AG04449 (cell line): ENCODE measurements at regions of chr12 and their contacts with region 1.

Region 1: DNA sequence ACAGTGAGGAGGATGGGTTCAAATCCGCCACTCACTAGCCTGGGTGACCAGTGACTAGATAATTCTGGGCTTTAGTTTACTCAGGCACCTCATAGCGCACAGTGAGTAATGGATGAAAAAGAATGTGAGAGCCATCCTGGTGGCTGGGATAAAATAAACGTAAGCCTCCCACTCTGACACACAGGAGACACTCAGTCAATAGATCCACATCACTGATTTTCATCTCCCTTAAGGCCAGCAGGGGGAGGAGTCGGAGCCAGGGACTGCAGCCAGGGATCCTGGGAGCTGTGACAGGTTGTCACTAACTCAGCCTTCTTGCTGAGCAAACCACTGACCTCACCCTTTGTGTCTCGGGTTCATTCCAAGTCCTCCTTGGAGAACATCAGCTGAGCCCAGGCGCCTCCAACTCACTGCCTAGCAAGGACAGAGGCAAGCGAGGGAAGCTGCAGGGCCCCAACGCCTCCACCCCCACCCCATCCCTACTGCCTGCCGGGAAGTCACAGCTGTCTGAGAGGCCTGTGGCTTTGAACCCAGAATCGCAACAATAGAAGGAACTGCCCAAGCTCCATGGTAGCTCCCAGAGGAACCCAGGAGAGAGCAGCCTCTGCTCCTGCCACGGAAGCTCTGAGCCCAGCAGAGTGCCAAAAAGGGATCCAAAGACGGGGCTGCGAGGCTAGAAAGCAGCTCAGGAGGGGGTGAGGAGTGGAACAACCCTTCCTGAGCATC is 30.7 kb downstream of the PXN start:
- DNase-seq: peak; percentile 88
- H3K4me3 ChIP-seq: peak overlapping the region; percentile 20
- CTCF ChIP-seq: peak; percentile 66

Region 2: GRCh38 chr12:119704065-119704747 is 530.6 kb before region 1 on chr12:
- CTCF ChIA-PET with region 1: no interaction called
- POLR2A ChIA-PET with region 1: no interaction called
- DNase-seq: no peak
- H3K4me3 ChIP-seq: no peak overlapping the region
- CTCF ChIP-seq: no peak

Region 3: DNA sequence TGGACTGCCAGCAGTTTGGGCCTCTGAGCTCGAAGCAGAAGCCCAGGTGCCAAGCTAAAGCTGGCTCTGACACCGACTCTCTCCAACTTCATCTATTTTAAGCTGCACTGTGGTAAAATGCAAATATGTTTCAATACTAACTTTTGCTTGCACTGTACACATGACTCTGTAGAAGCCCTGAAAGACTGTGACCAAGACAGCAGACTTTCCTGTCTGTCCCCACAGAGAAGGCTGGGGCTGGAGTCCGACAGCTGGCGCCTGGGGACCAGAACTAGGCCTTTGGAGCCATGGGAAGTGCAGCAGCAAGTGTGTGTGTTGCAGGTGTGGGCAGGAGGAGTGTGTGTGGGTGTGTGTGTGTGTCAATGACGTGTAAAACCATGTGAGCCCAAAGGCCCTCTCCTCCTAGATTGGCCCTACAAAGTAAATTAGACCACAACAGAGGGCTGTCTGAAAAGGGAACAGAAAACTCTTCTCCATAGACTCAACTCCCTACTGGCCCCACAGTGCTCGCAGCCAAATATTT is 101.9 kb before region 1 on chr12:
- CTCF ChIA-PET with region 1: no interaction called
- POLR2A ChIA-PET with region 1: no interaction called
- DNase-seq: no peak
- H3K4me3 ChIP-seq: no peak overlapping the region
- CTCF ChIP-seq: no peak

Region 4: GRCh38 chr12:120249875-120250795 is 15.3 kb after region 1 on chr12:
- CTCF ChIA-PET with region 1: interaction called, 1,066 read pairs
- POLR2A ChIA-PET with region 1: interaction called, 50 read pairs
- DNase-seq: no peak
- H3K4me3 ChIP-seq: no peak overlapping the region
- CTCF ChIP-seq: no peak

Region 5: DNA sequence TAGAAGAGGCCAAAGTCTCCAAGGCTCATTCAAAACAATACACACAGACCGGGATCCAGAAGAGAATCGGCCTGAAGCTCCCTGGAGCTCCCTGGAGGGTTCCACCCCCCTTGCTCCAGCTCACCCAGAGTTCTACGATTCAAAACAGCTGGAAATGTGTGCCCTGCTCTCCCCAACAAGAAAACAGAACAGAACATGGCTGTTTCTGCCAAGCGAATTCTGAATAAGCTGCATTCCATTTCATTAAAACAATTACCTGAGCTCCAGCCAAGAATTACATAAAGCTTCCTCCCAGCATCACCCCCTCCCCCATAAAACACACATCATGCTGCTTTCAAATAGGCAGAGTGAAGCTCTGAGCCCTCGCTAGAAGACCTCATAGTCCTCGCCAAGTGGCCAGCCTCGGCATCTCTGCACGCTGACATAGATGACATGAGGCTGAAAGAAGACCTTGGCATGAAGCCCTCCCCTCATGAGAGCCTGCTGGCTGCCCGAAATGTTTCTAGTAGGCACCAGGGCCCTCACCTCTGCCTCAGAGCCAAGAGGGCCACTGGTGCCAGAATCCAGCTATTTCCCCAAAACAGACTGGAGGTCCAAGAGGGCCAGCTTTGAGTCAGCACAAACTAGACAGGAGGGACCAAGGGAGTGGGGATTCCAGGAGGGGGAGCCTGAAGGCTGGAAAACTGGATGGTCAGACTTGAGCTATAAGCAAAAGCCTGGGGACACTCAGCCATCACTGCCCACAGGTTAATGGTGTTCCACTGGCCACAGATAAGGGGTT is 22.4 kb after region 1 on chr12:
- CTCF ChIA-PET with region 1: interaction called, 1,066 read pairs
- POLR2A ChIA-PET with region 1: interaction called, 98 read pairs
- DNase-seq: peak; percentile 65
- H3K4me3 ChIP-seq: peak overlapping the region; percentile 29
- CTCF ChIP-seq: peak; percentile 13

Region 6: GRCh38 chr12:120265473-120266179 is 30.8 kb after region 1 on chr12 and contains the start of gene PXN:
- CTCF ChIA-PET with region 1: interaction called, 1,066 read pairs
- POLR2A ChIA-PET with region 1: interaction called, 98 read pairs
- DNase-seq: no peak
- H3K4me3 ChIP-seq: peak within 1 kb of the TSS; percentile 81
- CTCF ChIP-seq: peak; percentile 88

Region 7: GRCh38 chr12:120437754-120438494 is 203.1 kb after region 1 on chr12 and contains the start of gene COX6A1:
- CTCF ChIA-PET with region 1: no interaction called
- POLR2A ChIA-PET with region 1: no interaction called
- DNase-seq: peak; percentile 73
- H3K4me3 ChIP-seq: peak within 1 kb of the TSS; percentile 91
- CTCF ChIP-seq: no peak